ENCODE measurements at regions of chr12 and their contacts with region 1.

Region 1: DNA sequence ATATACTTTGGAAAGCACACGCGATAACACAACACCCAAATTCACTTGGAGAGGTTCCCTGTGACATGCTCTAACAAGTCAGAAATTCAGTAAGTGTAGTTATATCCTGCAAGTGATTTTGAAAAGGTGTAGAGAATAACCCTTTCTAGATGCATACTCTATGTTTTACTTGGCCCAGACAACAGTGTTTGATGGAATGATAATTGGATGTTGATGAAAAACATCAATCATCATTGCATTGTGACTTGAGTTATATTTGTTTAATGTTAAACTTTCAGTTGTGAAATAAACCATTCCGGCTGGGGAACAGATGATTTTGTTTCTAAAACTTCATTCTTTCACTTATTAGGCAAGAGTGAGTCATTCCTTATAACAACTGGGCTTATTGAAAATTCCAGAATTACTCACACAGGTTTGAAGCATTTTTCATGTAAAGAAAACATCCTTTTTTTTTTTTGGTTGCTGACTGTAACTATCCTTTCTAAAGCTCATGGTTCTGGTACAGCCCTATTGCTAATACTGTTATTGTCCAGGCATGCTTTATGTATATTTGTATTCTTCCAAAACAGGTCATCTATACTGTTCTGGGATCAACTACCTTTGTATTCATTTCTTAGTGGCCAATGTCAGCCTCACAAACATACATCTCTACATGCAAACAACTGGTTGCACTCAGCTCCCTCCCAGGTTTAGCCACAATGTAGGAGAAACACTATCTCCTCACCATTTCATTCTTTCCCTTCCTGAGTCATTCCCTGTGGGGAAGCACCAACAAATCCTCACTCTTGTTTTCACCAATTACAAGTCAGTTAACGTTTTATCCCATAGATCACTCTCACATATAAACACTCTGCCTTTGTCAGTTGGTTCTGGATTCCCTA is 121.2 kb upstream of the LRIG3 start:
- DNase-seq: peak; percentile 94
- H3K4me3 Mint-ChIP-seq: peak overlapping the region; percentile 62
- H3K27ac Mint-ChIP-seq: peak overlapping the region; percentile 64
- H3K4me1 Mint-ChIP-seq: peaks cover 45% of the 10 kb centered on the region
- H3K27me3 Mint-ChIP-seq: no peaks in the 10 kb centered on the region
- CTCF ChIP-seq: no peak

Region 2: GRCh38 chr12:58888131-58888783 is 153.2 kb before region 1 on chr12:
- CTCF ChIA-PET with region 1: interaction called, 3 read pairs
- POLR2A ChIA-PET with region 1: interaction called, 37 read pairs
- intact Hi-C with region 1: no loop called
- DNase-seq: peak; percentile 26
- H3K4me3 Mint-ChIP-seq: no peak overlapping the region
- H3K27ac Mint-ChIP-seq: peak overlapping the region; percentile 80
- H3K4me1 Mint-ChIP-seq: peaks cover 11% of the 10 kb centered on the region
- H3K27me3 Mint-ChIP-seq: no peaks in the 10 kb centered on the region
- CTCF ChIP-seq: no peak

Region 3: DNA sequence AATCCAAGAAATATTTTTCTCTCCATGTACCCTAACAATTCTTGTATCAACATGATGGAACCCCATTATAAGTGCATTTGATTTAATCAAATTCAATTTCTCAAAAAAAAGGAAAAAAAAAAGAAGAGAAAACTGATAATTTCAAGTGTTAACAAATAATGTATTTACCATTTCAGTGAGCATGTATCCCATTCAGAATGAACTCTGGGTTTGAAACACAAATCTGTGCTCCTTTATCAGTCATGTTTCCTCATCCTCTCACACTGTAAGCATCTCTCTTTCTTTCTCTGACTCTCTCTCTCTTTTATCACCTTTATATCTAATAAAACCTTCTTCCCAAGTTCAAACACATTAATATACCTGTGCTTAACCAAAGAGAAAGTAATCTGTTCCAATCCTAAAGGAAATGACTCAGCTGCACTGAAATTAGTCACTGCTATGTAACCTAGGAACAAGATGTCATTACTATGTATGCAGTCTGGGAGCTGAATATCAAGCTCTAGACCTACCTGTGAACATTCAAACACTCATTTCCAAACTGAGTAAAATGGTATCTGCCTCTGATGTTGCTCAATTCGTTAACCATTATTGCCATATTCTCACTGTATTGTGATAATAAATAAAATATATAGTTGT is 13.8 kb after region 1 on chr12:
- CTCF ChIA-PET with region 1: interaction called, 5 read pairs
- POLR2A ChIA-PET with region 1: interaction called, 44 read pairs
- intact Hi-C with region 1: no loop called
- DNase-seq: peak; percentile 88
- H3K4me3 Mint-ChIP-seq: peak overlapping the region; percentile 9
- H3K27ac Mint-ChIP-seq: peak overlapping the region; percentile 94
- H3K4me1 Mint-ChIP-seq: peaks cover 28% of the 10 kb centered on the region
- H3K27me3 Mint-ChIP-seq: no peaks in the 10 kb centered on the region
- CTCF ChIP-seq: no peak

Region 4: GRCh38 chr12:59077575-59078426 is 36.3 kb after region 1 on chr12:
- CTCF ChIA-PET with region 1: interaction called, 4 read pairs
- POLR2A ChIA-PET with region 1: interaction called, 389 read pairs
- intact Hi-C with region 1: loop called (anchors 1 kb)
- DNase-seq: peak; percentile 49
- H3K4me3 Mint-ChIP-seq: no peak overlapping the region
- H3K27ac Mint-ChIP-seq: peak overlapping the region; percentile 86
- H3K4me1 Mint-ChIP-seq: peaks cover 43% of the 10 kb centered on the region
- H3K27me3 Mint-ChIP-seq: no peaks in the 10 kb centered on the region
- CTCF ChIP-seq: no peak

Region 5: DNA sequence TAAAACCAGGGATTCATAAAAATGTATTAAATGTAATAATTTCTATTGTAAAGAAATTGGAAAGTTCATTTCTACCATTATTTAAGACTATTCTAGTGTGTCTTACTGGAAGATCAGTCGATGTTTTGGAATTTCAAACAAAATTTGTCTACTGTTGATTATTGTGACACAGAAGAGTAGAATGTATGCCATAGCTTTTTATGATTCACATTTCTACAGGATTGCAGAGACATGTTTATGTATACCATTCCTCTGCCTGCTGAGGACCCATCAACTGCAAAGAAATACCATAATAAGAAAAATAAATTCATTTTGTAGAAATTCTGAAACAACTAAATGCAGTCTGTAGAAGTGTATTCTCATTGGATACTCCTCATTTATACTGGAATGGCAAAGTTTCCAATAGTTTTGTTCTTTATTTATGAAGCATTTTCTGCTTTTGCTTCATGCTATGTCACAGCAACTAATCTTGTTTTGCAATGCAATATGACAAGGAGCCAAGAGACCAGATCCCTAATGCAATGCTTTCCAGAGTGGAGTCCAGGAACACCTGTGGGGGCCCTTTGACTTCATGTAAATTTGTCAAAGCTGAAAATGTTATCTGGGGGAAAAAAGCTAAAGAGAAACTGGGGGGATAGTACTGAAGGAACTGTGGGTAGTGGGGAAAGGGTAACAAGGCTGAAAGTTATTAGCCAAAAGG is 51.7 kb after region 1 on chr12:
- CTCF ChIA-PET with region 1: interaction called, 4 read pairs
- POLR2A ChIA-PET with region 1: interaction called, 10 read pairs
- intact Hi-C with region 1: no loop called
- DNase-seq: no peak
- H3K4me3 Mint-ChIP-seq: no peak overlapping the region
- H3K27ac Mint-ChIP-seq: peak overlapping the region; percentile 7
- H3K4me1 Mint-ChIP-seq: peaks cover 6% of the 10 kb centered on the region
- H3K27me3 Mint-ChIP-seq: no peaks in the 10 kb centered on the region
- CTCF ChIP-seq: no peak

Region 6: GRCh38 chr12:60752589-60752988 is 1711.1 kb after region 1 on chr12:
- CTCF ChIA-PET with region 1: no interaction called
- POLR2A ChIA-PET with region 1: no interaction called
- intact Hi-C with region 1: no loop called
- DNase-seq: no peak
- H3K4me3 Mint-ChIP-seq: no peak overlapping the region
- H3K27ac Mint-ChIP-seq: no peak overlapping the region
- H3K4me1 Mint-ChIP-seq: no peaks in the 10 kb centered on the region
- H3K27me3 Mint-ChIP-seq: no peaks in the 10 kb centered on the region
- CTCF ChIP-seq: no peak

Measured in MCF 10A (cell line).